ENCODE measurements at regions of chr5 and their contacts with region 1.

Region 1: GRCh38 chr5:88883059-88883835 is at the start of gene MEF2C:
- DNase-seq: peak; percentile 74
- ATAC-seq: peak; percentile 83 to 93
- total RNA-seq, gene MEF2C: 48.3 to 53.7 TPM

Region 2: GRCh38 chr5:88729084-88729828 is 154.0 kb before region 1 on chr5:
- intact Hi-C with region 1: loop called in 1 of 2 experiments (anchors 10 kb)
- DNase-seq: peak; percentile 49
- ATAC-seq: peak; percentile 81 to 83

Region 3: DNA sequence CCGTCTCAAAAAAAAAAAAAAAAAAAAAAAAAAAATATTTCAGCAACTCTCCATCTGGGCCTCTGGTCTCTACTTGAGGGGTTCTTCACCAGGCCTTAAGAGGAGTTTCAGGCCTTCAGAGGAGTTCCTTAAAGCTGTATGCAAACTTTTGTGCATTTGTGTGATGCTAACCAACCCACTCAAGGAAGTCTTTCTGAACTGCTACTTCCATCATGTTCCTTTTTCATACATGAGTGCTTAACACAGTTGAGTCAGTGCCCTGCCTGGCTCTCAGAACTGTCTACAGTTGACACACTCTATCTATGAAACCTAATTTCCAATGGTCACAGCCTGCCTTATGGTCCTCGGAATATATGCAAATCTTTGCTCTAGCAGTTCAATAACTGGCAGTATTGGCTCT is 146.8 kb before region 1 on chr5:
- intact Hi-C with region 1: loop called (anchors 5 to 10 kb)
- DNase-seq: no peak
- ATAC-seq: no peak

Region 4: DNA sequence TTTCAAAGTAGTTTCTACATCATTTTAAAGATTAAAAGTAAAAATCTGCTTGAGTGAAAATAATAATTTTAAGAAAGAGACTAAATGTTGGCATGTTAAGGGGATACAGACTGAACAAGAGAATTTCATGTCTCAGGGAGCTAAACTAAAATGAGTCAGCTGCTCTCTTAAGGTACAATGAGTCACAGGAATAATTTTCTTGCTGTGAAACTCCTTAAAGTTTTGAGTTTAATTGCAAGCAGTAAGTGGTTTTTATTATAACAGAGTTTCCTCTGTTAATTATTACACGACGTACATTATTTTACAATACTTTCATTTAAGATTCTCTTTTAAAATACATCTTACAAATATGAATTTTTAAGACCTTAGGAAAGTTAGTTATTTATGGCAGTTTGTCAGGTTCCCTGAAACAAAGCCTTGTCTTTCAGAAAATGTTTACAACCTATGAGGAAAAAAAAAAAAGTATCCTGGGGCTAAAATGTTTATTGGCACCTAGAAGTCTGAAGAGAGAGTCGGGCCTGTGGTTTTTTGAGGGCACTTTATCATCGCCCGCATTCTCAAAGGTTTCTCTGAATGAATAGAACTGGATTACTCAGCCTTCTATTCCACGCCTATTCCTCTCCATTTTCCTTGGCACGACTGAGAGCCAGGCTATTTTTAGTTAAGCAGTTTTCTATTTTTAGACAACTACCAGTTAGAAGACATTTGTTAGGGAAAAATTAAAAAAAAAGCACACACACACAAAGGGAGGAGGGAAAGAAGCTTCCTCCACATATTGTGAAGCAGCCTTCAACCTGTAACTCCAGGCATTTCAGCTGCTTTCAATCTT is 97.6 kb before region 1 on chr5:
- intact Hi-C with region 1: loop called in 1 of 2 experiments (anchors 10 kb)
- DNase-seq: peak; percentile 25
- ATAC-seq: peak; percentile 93 to 96

Region 5: DNA sequence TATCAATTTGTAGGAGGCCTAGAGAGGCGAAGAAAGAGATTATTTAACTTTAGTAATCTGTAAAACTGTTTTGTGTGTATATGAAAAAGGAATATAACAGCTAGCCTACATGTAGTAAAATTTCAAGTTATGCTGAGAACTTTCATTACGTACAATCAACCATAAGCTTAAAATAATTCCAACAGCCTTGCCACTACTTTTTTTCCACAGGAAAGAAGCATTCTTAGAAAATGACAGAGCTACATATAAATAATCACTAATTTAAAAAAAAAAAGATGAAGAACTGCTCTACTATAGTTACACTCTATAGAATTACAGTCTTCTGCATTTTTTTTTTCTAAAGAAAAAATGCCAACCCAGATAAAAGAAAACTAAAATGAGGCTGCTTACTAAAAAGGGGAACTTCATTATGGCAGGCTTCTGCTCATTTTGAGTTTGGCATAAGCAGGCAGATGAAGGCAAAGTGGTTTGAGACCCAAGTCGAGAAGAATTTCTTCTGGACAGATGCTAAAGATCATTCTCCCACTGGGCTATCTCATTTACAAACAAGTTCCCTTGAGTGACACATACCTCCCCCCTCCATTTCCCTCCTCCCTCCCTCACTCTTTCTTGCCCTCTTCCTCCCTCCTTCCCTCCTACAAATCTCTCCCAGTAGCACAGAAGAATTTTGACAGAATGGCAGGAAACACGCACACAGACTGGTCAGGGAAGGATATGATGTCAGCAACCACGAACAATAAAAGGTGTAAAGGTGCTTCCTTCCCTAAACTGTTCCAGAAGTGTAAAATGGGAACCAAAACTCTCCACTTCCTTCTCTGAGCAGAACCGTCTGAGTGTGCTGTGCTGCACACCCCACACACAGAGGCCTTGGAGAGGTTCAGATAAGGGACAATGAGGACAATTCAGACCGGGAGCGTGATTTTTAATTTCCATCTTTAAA is 56.3 kb before region 1 on chr5:
- intact Hi-C with region 1: loop called (anchors 5 to 10 kb)
- DNase-seq: peak; percentile 45
- ATAC-seq: peak; percentile 80 to 87

Region 6: DNA sequence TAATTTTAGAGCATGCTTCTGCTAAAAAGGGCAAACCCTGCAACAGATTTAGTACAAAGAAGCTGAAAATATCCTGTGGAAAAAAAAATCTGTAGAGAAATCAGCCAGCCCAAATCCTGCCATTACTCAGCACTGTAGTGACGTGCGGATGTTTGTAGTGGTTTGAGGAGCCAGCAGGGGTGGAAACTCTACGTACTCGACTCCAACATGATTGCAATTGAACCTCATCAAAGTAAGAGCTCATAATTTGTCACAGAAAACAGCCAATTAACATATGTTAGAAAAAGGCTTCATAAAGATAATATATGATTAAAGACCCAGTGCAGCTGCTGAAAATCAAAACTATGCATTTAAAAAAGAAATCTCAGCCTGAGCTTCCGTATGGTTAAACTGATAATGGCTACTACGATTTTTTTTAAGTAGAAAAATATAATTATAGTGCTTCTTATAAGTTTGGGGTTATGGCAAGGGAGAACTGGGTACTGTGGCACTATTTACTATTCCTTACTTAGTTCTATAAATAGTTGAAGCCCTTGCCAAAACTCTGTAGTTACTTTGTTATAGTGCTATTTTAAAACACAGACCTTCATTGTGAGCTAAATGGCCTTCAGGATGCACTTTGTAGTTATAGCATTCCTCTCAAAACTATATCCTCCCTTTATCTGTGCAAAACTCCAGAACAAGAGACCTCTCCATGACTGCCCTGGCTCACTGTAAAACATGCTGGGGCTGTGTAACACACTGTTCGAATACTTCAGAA is 49.7 kb before region 1 on chr5:
- intact Hi-C with region 1: loop called (anchors 5 to 10 kb)
- DNase-seq: peak; percentile 61
- ATAC-seq: peak; percentile 77

Region 7: DNA sequence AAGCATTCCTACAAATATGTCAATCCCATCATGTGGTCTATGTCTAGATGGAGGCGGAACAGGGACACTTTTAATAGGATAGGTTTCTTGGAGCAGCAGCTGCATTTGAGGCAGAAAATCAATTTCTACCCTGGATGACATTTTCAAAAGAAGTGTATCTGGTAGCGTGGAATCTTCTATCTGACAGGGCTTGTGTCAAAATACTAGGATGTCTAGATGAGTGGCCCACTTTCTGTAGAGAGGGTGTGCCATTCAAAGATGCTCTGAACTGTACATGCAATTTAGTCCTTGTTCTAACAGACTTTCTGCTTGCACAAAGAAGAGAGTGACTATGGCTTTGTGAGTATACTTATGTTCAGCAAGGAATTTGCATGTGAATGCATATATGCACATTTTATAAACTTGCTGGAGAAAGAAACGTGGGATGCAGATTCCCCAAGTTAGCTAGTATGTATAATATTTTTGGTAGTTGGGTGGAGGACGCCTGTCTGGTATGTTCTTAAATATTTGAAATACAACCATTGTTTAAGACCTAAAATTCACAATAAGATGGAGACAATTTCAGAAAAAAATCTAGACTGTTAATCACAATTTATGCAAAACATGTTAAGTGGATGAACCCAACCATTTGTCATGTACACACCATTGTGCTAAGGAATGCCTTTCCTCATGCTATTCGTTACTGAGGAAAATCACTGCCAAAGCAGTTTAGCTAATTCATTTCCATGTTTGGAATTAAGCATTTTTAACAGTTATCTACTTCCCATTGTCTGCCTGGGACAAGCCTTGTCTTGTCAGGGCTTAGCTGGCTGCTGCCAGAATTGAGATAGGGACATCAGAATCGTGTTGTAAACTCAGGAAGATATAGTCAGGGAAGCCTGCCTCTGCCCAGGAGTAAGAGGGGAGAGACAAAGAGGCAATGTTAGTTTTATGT is 128.8 kb after region 1 on chr5:
- intact Hi-C with region 1: no loop called
- DNase-seq: no peak
- ATAC-seq: no peak